CD8-positive, alpha-beta T cell (primary cell): ENCODE measurements at regions of chr12 and their contacts with region 1.

Region 1: GRCh38 chr12:57744777-57745484 is at the start of gene TSPAN31:
- DNase-seq: peak; percentile 85 to 99 (median 94)
- ATAC-seq: peak; percentile 82
- H3K4me3 ChIP-seq: peak within 1 kb of the TSS; percentile 62 to 70
- H3K4me3 Mint-ChIP-seq: peak within 1 kb of the TSS; percentile 91
- H3K27ac ChIP-seq: peak within 1 kb of the TSS; percentile 84 to 94
- H3K27ac Mint-ChIP-seq: peak within 1 kb of the TSS; percentile 93
- H3K4me1 ChIP-seq: peaks cover 40% of the 10 kb centered on the region
- H3K4me1 Mint-ChIP-seq: peaks cover 53% of the 10 kb centered on the region
- H3K27me3 ChIP-seq: no peaks in the 10 kb centered on the region
- H3K27me3 Mint-ChIP-seq: no peaks in the 10 kb centered on the region
- CTCF ChIP-seq: no peak
- total RNA-seq, gene TSPAN31: 7.3 to 8.0 TPM

Region 2: GRCh38 chr12:57476162-57476992 is 268.6 kb before region 1 on chr12:
- CTCF ChIA-PET with region 1: no interaction called
- POLR2A ChIA-PET with region 1: no interaction called
- intact Hi-C with region 1: loop called (anchors 5 kb)
- DNase-seq: peak; percentile 50 to 83 (median 81)
- ATAC-seq: peak; percentile 22
- H3K4me3 ChIP-seq: peak overlapping the region; percentile 70 to 83
- H3K4me3 Mint-ChIP-seq: peak overlapping the region; percentile 99
- H3K27ac ChIP-seq: peak overlapping the region; percentile 95 to 98
- H3K27ac Mint-ChIP-seq: peak overlapping the region; percentile 98
- H3K4me1 ChIP-seq: peaks cover 77% of the 10 kb centered on the region
- H3K4me1 Mint-ChIP-seq: peaks cover 84% of the 10 kb centered on the region
- H3K27me3 ChIP-seq: no peaks in the 10 kb centered on the region
- H3K27me3 Mint-ChIP-seq: no peaks in the 10 kb centered on the region
- CTCF ChIP-seq: peak; percentile 67

Region 3: DNA sequence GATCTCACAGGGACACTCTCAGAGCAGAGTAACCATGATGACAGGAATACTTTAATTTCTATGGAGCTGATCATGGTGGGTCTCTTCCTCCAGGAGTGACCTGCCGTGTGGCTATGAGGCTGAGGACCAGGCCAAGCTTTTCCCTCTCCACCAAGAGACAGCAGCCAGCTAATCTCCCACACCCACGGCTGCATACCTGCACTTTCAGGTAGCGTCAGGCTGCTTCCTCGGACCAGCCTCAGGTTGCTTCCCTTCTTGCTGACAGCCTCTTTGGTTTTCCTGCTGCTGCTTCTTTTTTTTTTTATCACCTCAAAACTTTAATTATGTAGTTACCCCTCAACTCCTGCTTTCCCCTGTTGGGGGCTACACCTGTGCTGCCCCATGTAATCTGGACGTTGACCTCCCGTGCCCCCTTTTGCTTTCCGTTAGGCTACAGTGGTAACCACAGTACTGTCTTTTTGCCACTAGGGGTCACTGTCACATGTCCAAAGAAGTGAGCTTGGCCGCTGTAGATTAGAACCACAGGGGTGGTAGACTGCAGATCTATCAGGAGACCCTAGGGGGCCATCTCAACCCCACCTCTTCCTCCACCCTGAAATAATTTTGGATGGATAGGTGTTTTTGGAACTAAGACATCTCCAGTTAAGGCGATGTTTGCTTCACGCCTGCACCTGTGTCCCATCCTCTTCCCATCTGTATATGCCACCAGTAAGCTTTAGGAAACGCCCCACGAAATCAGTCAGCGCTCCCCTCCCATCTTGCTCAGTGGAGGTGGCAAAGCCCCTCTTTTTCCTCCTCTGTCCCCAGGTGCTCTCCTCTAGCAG is 161.7 kb before region 1 on chr12:
- CTCF ChIA-PET with region 1: interaction called, 31 read pairs
- POLR2A ChIA-PET with region 1: no interaction called
- intact Hi-C with region 1: loop called (anchors 1 kb)
- DNase-seq: peak; percentile 30 to 90 (median 74)
- ATAC-seq: peak; percentile 100
- H3K4me3 ChIP-seq: no peak overlapping the region
- H3K4me3 Mint-ChIP-seq: no peak overlapping the region
- H3K27ac ChIP-seq: no peak overlapping the region
- H3K27ac Mint-ChIP-seq: no peak overlapping the region
- H3K4me1 ChIP-seq: no peaks in the 10 kb centered on the region
- H3K4me1 Mint-ChIP-seq: peaks cover 2% of the 10 kb centered on the region
- H3K27me3 ChIP-seq: peaks cover 0 to 7% of the 10 kb centered on the region in 2 experiments
- H3K27me3 Mint-ChIP-seq: no peaks in the 10 kb centered on the region
- CTCF ChIP-seq: peak; percentile 95

Region 4: GRCh38 chr12:57611108-57611809 is 133.7 kb before region 1 on chr12 and contains the start of gene ARHGEF25:
- CTCF ChIA-PET with region 1: no interaction called
- POLR2A ChIA-PET with region 1: no interaction called
- intact Hi-C with region 1: no loop called
- DNase-seq: peak in 6 of 9 experiments; percentile 33 to 64 (median 55)
- ATAC-seq: peak; percentile 74
- H3K4me3 ChIP-seq: peak within 1 kb of the TSS; percentile 36 to 54
- H3K4me3 Mint-ChIP-seq: peak within 1 kb of the TSS; percentile 78
- H3K27ac ChIP-seq: no peak within 1 kb of the TSS
- H3K27ac Mint-ChIP-seq: no peak within 1 kb of the TSS
- H3K4me1 ChIP-seq: peaks cover 11% of the 10 kb centered on the region
- H3K4me1 Mint-ChIP-seq: peaks cover 11% of the 10 kb centered on the region
- H3K27me3 ChIP-seq: no peaks in the 10 kb centered on the region
- H3K27me3 Mint-ChIP-seq: peaks cover 16% of the 10 kb centered on the region
- CTCF ChIP-seq: no peak
- total RNA-seq, gene ARHGEF25: 0.33 to 0.36 TPM

Region 5: DNA sequence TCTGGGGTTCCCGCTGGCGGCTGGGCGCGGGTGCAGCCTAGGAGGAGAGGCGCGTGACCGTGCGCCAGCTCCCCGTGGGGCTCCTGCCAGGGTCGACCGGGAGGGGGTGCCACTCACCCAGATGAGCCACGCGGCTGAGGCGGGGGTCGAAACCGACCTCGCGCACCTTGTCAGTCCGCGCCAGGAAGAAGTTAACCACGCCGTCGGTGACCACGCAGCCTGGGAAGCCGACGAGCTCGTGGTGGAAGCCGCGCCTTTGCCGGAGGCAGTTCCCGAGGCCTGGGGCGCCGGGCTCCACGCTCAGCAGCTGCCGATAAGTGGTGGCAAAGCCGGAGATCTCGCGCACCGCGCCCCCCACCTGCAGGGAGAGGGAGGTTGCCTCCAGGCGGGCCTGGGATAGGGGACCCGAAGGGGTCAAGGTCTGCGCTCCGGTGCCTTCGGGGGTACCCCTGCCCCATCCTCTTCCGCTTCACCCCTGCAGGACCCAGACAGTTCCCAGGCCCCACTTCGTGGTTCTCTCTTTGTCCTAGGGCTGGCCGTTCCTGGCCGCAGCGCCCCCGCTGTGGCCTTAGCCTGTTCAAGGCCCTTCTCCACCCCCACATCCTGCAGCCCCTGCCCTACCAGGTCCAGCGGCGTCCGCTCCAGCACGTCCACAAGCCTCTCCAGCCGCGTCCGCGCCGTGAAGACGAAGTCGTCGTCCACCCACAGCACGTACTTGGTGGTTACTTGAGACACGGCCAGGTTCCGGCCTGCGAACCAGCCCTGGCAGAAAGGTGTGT is 117.2 kb before region 1 on chr12:
- CTCF ChIA-PET with region 1: interaction called, 3 read pairs
- POLR2A ChIA-PET with region 1: no interaction called
- intact Hi-C with region 1: loop called in 1 of 2 experiments (anchors 5 kb)
- DNase-seq: peak in 5 of 9 experiments; percentile 26 to 54 (median 42)
- ATAC-seq: peak; percentile 61
- H3K4me3 ChIP-seq: no peak overlapping the region
- H3K4me3 Mint-ChIP-seq: peak overlapping the region; percentile 59
- H3K27ac ChIP-seq: no peak overlapping the region
- H3K27ac Mint-ChIP-seq: no peak overlapping the region
- H3K4me1 ChIP-seq: peaks cover 15% of the 10 kb centered on the region
- H3K4me1 Mint-ChIP-seq: peaks cover 14% of the 10 kb centered on the region
- H3K27me3 ChIP-seq: peaks cover 46 to 66% of the 10 kb centered on the region in 2 experiments
- H3K27me3 Mint-ChIP-seq: peaks cover 78% of the 10 kb centered on the region
- CTCF ChIP-seq: peak; percentile 12

Region 6: DNA sequence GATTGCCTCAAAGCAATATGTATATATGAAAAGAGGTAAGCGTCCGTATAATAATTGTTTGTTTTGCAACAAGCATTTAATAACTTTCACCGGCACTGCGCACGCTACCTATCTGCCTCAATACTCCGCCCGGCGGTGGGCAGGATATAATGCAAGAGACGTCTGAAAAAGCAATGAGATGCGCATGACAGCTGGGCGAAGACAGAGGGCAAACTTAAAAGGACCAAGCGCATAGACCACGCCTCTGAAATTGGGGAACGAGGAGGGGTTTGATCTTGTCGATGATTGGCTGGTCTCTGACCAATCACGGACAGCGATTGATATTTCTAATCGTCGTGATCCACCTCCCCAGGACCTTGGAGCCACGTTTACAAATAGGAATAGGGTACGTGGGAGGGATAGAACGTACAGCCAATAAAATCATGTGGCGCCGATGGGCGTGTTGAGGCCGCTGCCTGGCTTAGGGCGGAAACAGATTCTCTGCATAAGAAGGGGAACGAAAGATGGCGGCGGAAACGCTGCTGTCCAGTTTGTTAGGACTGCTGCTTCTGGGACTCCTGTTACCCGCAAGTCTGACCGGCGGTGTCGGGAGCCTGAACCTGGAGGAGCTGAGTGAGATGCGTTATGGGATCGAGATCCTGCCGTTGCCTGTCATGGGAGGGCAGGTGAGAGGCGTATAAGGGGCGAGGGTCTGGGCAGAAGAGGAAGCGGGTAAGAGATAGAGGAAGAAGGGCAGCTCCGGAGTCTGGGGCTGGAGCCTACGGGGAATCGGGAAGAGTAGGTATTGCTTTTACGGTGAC is 51.1 kb before region 1 on chr12 and contains the start of gene OS9:
- CTCF ChIA-PET with region 1: interaction called, 5 read pairs
- POLR2A ChIA-PET with region 1: interaction called, 8 read pairs
- intact Hi-C with region 1: loop called (anchors 1 to 2 kb)
- DNase-seq: peak; percentile 89 to 100 (median 92)
- ATAC-seq: peak; percentile 92
- H3K4me3 ChIP-seq: peak within 1 kb of the TSS; percentile 89 to 95
- H3K4me3 Mint-ChIP-seq: no peak within 1 kb of the TSS
- H3K27ac ChIP-seq: peak within 1 kb of the TSS; percentile 77 to 81
- H3K27ac Mint-ChIP-seq: no peak within 1 kb of the TSS
- H3K4me1 ChIP-seq: peaks cover 17% of the 10 kb centered on the region
- H3K4me1 Mint-ChIP-seq: peaks cover 18% of the 10 kb centered on the region
- H3K27me3 ChIP-seq: no peaks in the 10 kb centered on the region
- H3K27me3 Mint-ChIP-seq: peaks cover 5% of the 10 kb centered on the region
- CTCF ChIP-seq: peak; percentile 90
- total RNA-seq, gene OS9: 105 to 119 TPM

Region 7: GRCh38 chr12:57759360-57759980 is 14.5 kb after region 1 on chr12:
- CTCF ChIA-PET with region 1: interaction called, 16 read pairs
- POLR2A ChIA-PET with region 1: interaction called, 3 read pairs
- intact Hi-C with region 1: loop called in 1 of 2 experiments (anchors 2 kb)
- DNase-seq: peak in 6 of 9 experiments; percentile 31 to 71 (median 50)
- ATAC-seq: no peak
- H3K4me3 ChIP-seq: no peak overlapping the region
- H3K4me3 Mint-ChIP-seq: no peak overlapping the region
- H3K27ac ChIP-seq: no peak overlapping the region
- H3K27ac Mint-ChIP-seq: peak overlapping the region; percentile 10
- H3K4me1 ChIP-seq: peaks cover 18% of the 10 kb centered on the region
- H3K4me1 Mint-ChIP-seq: peaks cover 37% of the 10 kb centered on the region
- H3K27me3 ChIP-seq: peaks cover 0 to 8% of the 10 kb centered on the region in 2 experiments
- H3K27me3 Mint-ChIP-seq: peaks cover 7% of the 10 kb centered on the region
- CTCF ChIP-seq: peak; percentile 56